Common myeloid progenitor, CD34-positive (primary cell): ENCODE measurements at regions of chr13 and their contacts with region 1.

Region 1: GRCh38 chr13:21164631-21165030 is 11.7 kb downstream of the SKA3 start:
- DNase-seq: no peak
- H3K4me3 ChIP-seq: no peak overlapping the region
- H3K27ac ChIP-seq: no peak overlapping the region
- H3K4me1 ChIP-seq: no peaks in the 10 kb centered on the region
- H3K27me3 ChIP-seq: no peaks in the 10 kb centered on the region

Region 2: GRCh38 chr13:20869542-20869941 is 295.1 kb before region 1 on chr13:
- CTCF ChIA-PET with region 1: no interaction called
- POLR2A ChIA-PET with region 1: no interaction called
- DNase-seq: peak; percentile 14 to 42 (median 36)
- H3K4me3 ChIP-seq: no peak overlapping the region
- H3K27ac ChIP-seq: no peak overlapping the region
- H3K4me1 ChIP-seq: no peaks in the 10 kb centered on the region
- H3K27me3 ChIP-seq: no peaks in the 10 kb centered on the region

Region 3: GRCh38 chr13:21152251-21152899 is 12.3 kb before region 1 on chr13:
- CTCF ChIA-PET with region 1: interaction called, 11 read pairs
- POLR2A ChIA-PET with region 1: no interaction called
- DNase-seq: no peak
- H3K4me3 ChIP-seq: no peak overlapping the region
- H3K27ac ChIP-seq: no peak overlapping the region
- H3K4me1 ChIP-seq: peaks cover 6 to 17% (median 11%) of the 10 kb centered on the region in 4 experiments
- H3K27me3 ChIP-seq: no peaks in the 10 kb centered on the region

Region 4: DNA sequence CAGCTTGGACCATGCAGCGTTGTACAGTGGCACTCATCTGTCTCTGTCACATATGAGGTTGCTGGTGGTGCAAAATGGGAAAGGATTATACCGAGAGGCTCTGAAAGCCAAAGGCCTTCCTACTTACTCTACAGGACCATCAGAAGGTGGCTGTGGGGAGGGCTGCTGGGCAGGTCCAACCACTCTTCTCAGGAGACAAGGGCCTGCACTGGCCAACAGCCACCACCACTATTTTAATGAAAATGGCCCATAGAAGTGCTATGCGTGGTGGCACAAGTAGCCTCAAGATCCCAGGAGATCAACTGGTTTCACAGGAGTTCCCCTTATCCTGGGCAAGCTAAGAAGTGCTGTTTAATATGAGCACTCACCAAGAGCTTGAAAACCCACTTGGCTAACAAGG is 64.1 kb after region 1 on chr13:
- CTCF ChIA-PET with region 1: no interaction called
- POLR2A ChIA-PET with region 1: no interaction called
- DNase-seq: no peak
- H3K4me3 ChIP-seq: no peak overlapping the region
- H3K27ac ChIP-seq: no peak overlapping the region
- H3K4me1 ChIP-seq: peaks cover 0 to 12% (median 3%) of the 10 kb centered on the region in 4 experiments
- H3K27me3 ChIP-seq: no peaks in the 10 kb centered on the region

Region 5: GRCh38 chr13:21579754-21580316 is 415.2 kb after region 1 on chr13:
- CTCF ChIA-PET with region 1: no interaction called
- POLR2A ChIA-PET with region 1: no interaction called
- DNase-seq: peak in 2 of 3 donors; percentile 56 to 67
- H3K4me3 ChIP-seq: peak overlapping the region in 1 of 7 experiments; percentile 25
- H3K27ac ChIP-seq: no peak overlapping the region
- H3K4me1 ChIP-seq: peaks cover 0 to 15% (median 5%) of the 10 kb centered on the region in 4 experiments
- H3K27me3 ChIP-seq: no peaks in the 10 kb centered on the region